SK-N-SH (cell line): ENCODE measurements at regions of chr2 and their contacts with region 1.

Region 1: GRCh38 chr2:134454931-134455330 is 201.1 kb downstream of the MGAT5 start:
- DNase-seq: no peak
- H3K4me3 ChIP-seq: no peak overlapping the region
- H3K27ac ChIP-seq: no peak overlapping the region
- H3K4me1 ChIP-seq: no peaks in the 10 kb centered on the region; a peak in 1 of 4 replicates
- H3K27me3 ChIP-seq: no peaks in the 10 kb centered on the region
- CTCF ChIP-seq: no peak
- EP300 ChIP-seq: no peak
- RAD21 ChIP-seq: no peak

Region 2: DNA sequence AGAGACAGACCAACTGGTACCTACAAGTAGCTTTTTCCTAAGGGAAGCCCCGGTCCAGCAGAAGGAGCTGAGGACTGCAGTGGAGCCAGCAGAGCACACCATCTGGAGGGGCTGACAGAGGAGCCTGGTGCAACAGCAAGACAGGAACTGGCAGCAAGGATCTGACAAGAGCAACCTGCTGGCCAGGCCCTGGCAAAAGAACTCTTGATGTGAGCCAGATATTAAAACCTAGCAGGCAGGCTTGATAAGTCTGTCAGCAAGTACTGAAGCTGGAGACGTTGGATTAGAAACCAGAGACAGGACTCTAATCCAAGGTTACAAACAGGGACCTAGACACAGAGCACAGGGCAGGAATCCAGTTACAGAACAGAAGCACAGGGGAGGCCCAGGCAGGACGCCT is 461.8 kb before region 1 on chr2:
- CTCF ChIA-PET with region 1: no interaction called
- POLR2A ChIA-PET with region 1: no interaction called
- DNase-seq: peak; percentile 26
- H3K4me3 ChIP-seq: no peak overlapping the region
- H3K27ac ChIP-seq: no peak overlapping the region; a peak in 1 of 4 replicates
- H3K4me1 ChIP-seq: peaks cover 0 to 5% of the 10 kb centered on the region in 2 experiments; a peak in 1 of 4 replicates
- H3K27me3 ChIP-seq: no peaks in the 10 kb centered on the region
- CTCF ChIP-seq: no peak
- EP300 ChIP-seq: no peak
- RAD21 ChIP-seq: no peak

Region 3: GRCh38 chr2:134108113-134108512 is 346.8 kb before region 1 on chr2:
- CTCF ChIA-PET with region 1: interaction called, 10 read pairs
- POLR2A ChIA-PET with region 1: no interaction called
- DNase-seq: no peak
- H3K4me3 ChIP-seq: no peak overlapping the region
- H3K27ac ChIP-seq: no peak overlapping the region
- H3K4me1 ChIP-seq: no peaks in the 10 kb centered on the region
- H3K27me3 ChIP-seq: no peaks in the 10 kb centered on the region
- CTCF ChIP-seq: no peak
- EP300 ChIP-seq: no peak
- RAD21 ChIP-seq: no peak

Region 4: DNA sequence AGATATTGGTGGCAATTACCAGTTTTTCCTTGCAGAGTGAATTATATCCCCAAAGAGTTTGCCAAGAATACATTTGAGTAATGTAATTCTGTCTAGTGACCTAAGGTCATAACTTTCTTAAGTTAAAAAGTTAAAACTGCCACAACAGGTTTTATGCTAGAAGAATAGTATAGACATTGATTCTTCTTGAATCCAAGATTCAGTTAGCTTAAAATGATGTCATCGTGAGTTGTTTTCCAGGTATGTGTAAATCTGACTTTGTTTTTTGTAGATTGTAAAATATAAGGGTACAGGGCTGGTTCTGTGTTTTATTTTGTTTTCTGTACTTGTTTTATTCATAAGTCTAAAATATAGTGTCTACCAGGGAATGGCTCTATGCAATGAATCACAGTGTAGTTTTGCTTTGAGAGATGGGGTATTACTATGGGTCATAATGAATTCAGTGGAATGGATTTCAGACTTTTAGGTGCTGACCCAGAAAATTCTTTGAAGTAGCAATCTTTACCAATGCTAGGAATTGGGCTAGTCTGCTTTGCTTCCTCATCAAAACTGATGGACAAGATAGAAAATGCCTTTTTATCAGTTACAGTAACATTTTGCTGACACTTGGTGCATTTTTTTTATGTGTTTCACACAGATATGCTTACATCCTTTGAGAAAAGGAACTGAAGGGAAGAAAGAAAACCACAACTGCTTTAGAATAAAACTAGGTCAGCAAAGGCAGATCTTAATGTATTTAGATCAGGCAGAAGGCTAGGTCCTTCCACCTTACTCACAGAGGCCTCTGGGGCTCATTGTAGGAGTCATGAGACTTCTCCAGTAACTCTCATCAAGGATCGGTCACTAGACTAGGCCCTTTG is 221.8 kb before region 1 on chr2:
- CTCF ChIA-PET with region 1: interaction called, 10 read pairs
- POLR2A ChIA-PET with region 1: no interaction called
- DNase-seq: no peak
- H3K4me3 ChIP-seq: no peak overlapping the region
- H3K27ac ChIP-seq: peak overlapping the region; percentile 14 to 87; a peak in 3 of 4 replicates
- H3K4me1 ChIP-seq: peaks cover 18 to 24% of the 10 kb centered on the region in 2 experiments; a peak in 3 of 4 replicates
- H3K27me3 ChIP-seq: no peaks in the 10 kb centered on the region
- CTCF ChIP-seq: no peak
- EP300 ChIP-seq: no peak
- RAD21 ChIP-seq: no peak

Region 5: DNA sequence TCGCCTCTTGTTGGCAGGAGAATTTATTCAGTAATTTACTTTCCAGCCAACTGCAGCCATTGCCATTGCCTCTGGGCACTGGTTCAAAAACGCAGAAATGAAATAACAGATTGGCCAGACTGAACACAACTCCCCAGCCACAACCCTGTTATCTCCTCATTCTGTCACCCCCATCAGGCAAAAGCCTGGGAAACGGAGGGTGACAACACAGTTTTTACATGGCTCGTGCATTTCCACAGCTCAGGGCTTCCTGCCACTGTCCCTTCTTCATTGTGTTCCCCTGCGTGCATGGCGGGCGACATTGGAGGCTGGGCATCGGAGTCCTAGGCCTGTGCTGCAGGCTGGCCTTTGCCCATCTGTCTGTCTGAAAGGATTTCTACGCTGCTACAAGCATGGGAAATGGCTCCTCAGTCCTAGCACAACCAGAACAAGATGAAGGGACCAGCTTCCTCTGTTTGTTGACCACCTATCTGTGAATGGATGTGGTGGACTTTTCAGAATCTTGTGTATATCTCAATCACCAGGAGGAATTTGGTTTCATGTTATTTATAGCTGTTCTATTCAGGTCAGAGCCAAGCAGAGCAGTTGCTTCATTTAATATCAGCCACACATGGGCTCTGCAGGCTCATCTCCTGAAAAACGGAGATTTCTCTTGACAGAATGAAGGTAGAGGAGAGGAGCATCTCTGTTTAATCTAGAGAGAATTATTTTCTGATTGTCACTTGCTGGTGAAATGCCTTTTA is 94.0 kb before region 1 on chr2:
- CTCF ChIA-PET with region 1: interaction called, 16 read pairs
- POLR2A ChIA-PET with region 1: no interaction called
- DNase-seq: peak; percentile 60
- H3K4me3 ChIP-seq: no peak overlapping the region
- H3K27ac ChIP-seq: peak overlapping the region in 1 of 2 experiments; percentile 97; a peak in 2 of 4 replicates
- H3K4me1 ChIP-seq: peaks cover 0 to 40% of the 10 kb centered on the region in 2 experiments; a peak in 2 of 4 replicates
- H3K27me3 ChIP-seq: no peaks in the 10 kb centered on the region
- CTCF ChIP-seq: no peak
- EP300 ChIP-seq: peak in 1 of 2 experiments; percentile 89; a peak in 2 of 4 replicates
- RAD21 ChIP-seq: peak; percentile 32; the same call in 1 of the 2 replicates

Region 6: DNA sequence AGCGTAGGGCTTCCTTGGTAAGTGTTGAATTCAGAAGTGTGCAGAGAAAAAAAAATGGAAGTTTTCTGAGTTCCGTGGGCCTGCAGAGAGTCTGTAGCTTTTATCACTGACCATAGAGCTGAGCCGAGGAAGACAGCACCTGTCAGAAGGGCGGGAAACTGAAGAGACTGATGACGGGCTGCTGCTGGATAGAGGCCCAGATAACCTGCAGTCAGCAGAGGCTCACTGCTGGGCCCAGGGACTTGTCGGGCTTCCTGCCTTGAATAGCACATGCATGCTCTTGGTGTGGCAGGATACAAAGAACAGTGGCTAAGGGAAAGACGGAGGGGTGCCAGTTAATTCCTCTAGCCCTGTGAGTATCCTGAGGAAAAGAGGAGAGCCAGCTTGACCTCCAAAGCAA is 34.7 kb before region 1 on chr2:
- CTCF ChIA-PET with region 1: interaction called, 21 read pairs
- POLR2A ChIA-PET with region 1: no interaction called
- DNase-seq: no peak
- H3K4me3 ChIP-seq: no peak overlapping the region
- H3K27ac ChIP-seq: no peak overlapping the region
- H3K4me1 ChIP-seq: peaks cover 0 to 3% of the 10 kb centered on the region in 2 experiments; a peak in 1 of 4 replicates
- H3K27me3 ChIP-seq: no peaks in the 10 kb centered on the region
- CTCF ChIP-seq: no peak
- EP300 ChIP-seq: no peak
- RAD21 ChIP-seq: no peak

Region 7: GRCh38 chr2:134892282-134893070 is 437.5 kb after region 1 on chr2:
- CTCF ChIA-PET with region 1: interaction called, 22 read pairs
- POLR2A ChIA-PET with region 1: no interaction called
- DNase-seq: no peak
- H3K4me3 ChIP-seq: no peak overlapping the region
- H3K27ac ChIP-seq: no peak overlapping the region
- H3K4me1 ChIP-seq: no peaks in the 10 kb centered on the region
- H3K27me3 ChIP-seq: no peaks in the 10 kb centered on the region
- CTCF ChIP-seq: no peak
- EP300 ChIP-seq: no peak
- RAD21 ChIP-seq: no peak